Left colon (tissue), 2 donors: ENCODE measurements at regions of chr1 and their contacts with region 1.

Region 1: DNA sequence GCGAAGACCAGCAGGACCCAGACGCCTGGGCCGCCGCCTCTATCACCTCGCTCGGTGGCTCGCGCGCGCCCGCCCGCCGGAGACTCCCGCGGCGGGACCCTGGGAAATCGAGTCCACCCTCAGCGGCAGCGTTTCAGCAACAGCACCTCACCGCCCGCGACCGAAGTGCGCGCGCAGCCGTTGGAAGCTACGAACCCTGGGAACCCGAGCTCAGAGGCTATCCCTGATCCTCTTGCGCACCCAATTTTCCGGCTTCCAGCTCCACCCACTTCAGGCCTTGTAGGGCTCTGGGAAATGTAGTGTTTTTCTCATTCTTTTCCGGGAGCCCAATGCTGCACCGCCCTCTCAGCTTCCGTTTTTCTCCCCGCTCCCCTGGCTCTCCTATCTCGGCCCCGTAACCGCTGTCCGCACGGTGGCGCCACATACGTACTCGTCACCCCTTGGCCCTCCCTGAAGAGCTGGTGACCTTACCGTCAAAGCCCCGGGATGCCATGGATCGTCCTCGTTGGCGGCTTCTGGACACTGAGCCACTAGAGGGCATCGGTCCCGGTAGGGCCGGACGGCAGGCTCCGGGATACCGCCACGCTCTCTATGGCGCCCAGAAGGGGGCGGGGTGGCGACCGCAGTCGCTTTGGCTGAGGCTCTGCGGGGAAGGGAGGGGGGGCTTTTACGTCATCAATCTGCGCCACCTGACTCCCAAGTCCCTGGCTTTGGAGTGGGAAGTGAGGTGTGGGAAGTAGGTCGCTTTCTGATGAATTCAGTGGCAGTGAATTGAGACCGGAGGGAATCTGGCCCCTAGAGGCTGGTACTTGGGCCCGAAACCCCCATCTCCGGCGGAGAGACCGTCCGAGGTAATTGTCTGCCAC is at the starts of genes ODR4 and TPR:
- DNase-seq: peak; percentile 99
- ATAC-seq: peak; percentile 91
- total RNA-seq, gene ODR4: 16.8 to 19.0 TPM
- total RNA-seq, gene TPR: 66.0 to 70.0 TPM

Region 2: GRCh38 chr1:185156854-185157598 is 1218.3 kb before region 1 on chr1 and contains the starts of genes SWT1 and TRMT1L:
- intact Hi-C with region 1: loop called in 1 of 2 experiments (anchors 10 kb)
- DNase-seq: peak; percentile 100
- ATAC-seq: peak; percentile 91
- total RNA-seq, gene SWT1: 4.1 to 6.7 TPM
- total RNA-seq, gene TRMT1L: 13.9 to 16.2 TPM

Region 3: DNA sequence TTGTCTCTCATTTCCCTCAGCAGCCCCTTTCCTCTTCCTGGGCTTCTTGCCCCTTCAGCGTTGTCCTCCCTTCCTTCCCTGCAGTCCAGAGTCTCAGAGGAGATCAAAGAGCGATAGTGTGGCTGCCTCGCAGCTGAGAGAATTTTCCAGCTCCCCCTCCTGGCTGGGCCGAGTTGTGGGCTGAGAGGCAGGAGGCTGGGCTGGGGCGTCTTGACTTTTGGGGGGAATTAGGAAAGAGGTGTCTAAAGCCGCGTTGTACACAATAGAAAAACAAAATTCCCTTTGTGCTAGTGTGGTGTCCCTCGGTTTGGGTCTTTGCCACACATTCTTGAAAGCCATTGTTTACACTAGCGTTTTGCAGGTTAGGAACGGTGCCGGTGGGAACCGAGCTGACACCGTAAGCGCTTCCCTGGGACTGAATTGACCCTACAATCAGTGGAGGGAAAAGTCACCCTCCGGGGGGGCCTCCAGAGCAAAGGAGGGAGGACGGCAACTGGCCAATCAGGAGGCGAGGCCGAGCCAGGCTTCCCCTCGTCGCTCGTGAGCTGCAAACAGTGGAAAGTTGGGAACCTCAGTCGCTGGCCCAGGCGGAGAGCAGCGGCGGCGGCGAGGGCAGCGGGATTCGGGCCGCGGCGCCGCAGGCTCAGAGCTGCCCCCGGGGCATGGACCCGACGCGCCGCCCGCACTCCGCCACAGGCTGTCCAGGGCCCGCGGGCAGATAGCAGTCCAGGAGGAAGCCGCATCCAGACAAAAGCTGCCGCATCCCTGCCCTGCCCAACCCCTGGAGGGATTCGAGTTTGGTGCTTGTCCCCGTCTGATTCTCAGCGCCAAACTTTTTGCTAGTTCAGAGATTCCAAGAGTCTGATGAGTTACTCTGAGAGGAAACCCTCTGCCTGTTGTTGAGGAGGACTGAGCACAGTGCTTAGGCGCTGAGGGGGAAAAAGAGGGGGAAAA is 641.2 kb before region 1 on chr1 and contains the start of gene HMCN1:
- intact Hi-C with region 1: no loop called
- DNase-seq: peak; percentile 32 to 41
- ATAC-seq: peak; percentile 86
- total RNA-seq, gene HMCN1: 1.7 to 3.9 TPM

Region 4: DNA sequence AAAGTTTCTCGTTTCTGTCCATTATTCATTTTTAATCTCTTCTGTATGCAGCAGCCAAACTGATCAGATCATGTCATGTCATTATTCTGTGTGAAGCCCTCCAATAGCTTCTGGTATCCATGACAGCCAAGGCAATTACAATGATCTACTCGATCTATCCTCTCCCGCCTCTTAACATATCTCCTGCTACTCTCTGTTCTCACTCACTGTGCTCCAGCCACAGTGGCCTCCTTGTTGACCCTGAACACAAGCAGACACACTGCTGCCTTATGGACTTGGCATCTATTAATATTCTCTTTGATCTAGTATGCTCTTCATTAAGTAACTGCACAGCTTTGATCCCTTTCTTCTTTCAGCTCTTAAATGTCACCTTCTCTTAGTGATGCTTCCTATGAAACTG is 59.8 kb before region 1 on chr1:
- intact Hi-C with region 1: no loop called
- DNase-seq: no peak
- ATAC-seq: no peak

Region 5: DNA sequence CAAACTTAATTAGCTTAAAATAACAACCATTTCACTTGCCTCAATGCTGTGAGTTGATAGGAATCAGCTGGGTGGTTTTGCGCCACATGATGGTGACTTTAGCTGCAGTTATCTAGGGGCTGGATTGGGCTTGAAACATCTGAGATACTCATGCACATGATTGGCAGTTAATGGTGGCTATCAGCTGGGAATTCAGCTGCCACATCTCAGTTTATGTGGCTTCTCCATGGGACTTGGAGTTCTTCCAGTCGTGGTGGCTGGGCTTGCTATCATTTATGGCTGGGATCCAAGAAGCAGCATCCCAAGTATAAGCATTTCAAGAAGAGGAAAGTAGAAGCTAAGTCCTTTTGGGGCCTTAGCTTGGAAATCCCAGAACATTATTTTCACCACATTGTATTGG is 49.2 kb after region 1 on chr1:
- intact Hi-C with region 1: no loop called
- DNase-seq: no peak
- ATAC-seq: no peak